Right lobe of liver (tissue), 6 donors: ENCODE measurements at regions of chr1 and their contacts with region 1.

Region 1: GRCh38 chr1:42173155-42173933 is 8.8 kb upstream of the GUCA2A start:
- DNase-seq: peak in 2 of 3 donors; percentile 72
- ATAC-seq: peak; percentile 76 to 86 (median 78)
- H3K4me3 ChIP-seq: no peak overlapping the region
- H3K27ac ChIP-seq: peak overlapping the region in 2 of 3 donors; percentile 0 to 8
- H3K4me1 ChIP-seq: peaks cover 0 to 19% (median 4%) of the 10 kb centered on the region in 4 donors
- H3K27me3 ChIP-seq: no peaks in the 10 kb centered on the region
- CTCF ChIP-seq: peak; percentile 87 to 98 (median 96)
- POLR2A ChIP-seq: no peak

Region 2: DNA sequence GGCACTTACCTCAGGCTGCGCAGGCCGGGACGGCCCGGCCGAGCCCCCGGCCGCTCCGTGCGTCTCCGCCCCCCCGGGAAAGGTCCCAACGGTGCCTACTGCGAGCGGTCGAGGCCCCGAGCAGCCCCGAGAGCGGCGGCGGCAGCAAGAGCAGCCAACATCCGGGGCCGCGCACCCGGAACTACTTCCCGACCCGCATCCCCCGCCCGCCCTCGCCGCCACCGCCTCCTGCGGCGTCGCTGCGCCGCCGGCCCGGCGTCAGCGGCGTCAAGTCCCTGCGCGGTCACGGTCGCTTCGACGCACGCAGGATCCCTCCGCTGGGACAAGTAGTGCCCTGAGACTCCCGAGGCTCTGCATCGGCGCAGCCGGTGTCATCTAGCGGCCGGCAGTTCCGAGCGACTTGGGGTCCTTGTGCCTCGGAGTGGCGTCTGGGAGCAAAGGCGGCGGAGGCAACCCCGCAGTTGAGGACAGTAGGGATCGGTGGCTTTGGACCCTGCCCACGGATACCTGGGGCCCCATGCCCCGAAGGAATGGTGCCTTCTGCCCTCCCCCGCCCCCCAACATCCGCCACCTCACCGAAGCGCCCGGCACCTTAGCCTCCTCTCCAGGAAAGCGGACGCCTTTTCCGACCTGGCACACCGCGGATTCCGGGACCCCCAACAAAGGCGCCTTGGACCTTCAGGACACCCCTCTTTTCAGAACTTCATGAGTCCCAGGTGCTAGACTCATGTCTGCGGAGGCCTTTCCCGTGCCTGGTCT is 161.9 kb after region 1 on chr1 and contains the start of gene FOXJ3:
- intact Hi-C with region 1: loop called in 1 of 2 experiments (anchors 10 kb)
- DNase-seq: peak; percentile 94 to 95 (median 94)
- ATAC-seq: peak; percentile 83 to 93 (median 93)
- H3K4me3 ChIP-seq: peak within 1 kb of the TSS; percentile 93 to 96 (median 95)
- H3K27ac ChIP-seq: peak within 1 kb of the TSS; percentile 94 to 96 (median 94)
- H3K4me1 ChIP-seq: peaks cover 0 to 18% (median 5%) of the 10 kb centered on the region in 4 donors
- H3K27me3 ChIP-seq: no peaks in the 10 kb centered on the region
- CTCF ChIP-seq: peak in 2 of 4 donors; percentile 12 to 14
- POLR2A ChIP-seq: peak; percentile 75
- total RNA-seq, gene FOXJ3: 12.1 to 18.4 (median 14.5) TPM